ENCODE measurements at regions of chr22 and their contacts with region 1.

Region 1: GRCh38 chr22:38850941-38851849 is 7.4 kb upstream of the NPTXR start:
- DNase-seq: no peak
- H3K4me3 ChIP-seq: no peak overlapping the region
- H3K27ac ChIP-seq: no peak overlapping the region
- H3K4me1 ChIP-seq: no peaks in the 10 kb centered on the region
- H3K27me3 ChIP-seq: peaks cover 0 to 11% (median 0%) of the 10 kb centered on the region in 3 donors
- CTCF ChIP-seq: no peak
- EP300 ChIP-seq: no peak
- POLR2A ChIP-seq: no peak

Region 2: GRCh38 chr22:38777087-38777671 is 74.0 kb before region 1 on chr22:
- intact Hi-C with region 1: loop called (anchors 10 kb)
- DNase-seq: no peak
- H3K4me3 ChIP-seq: no peak overlapping the region
- H3K27ac ChIP-seq: no peak overlapping the region
- H3K4me1 ChIP-seq: no peaks in the 10 kb centered on the region
- H3K27me3 ChIP-seq: no peaks in the 10 kb centered on the region
- CTCF ChIP-seq: no peak
- EP300 ChIP-seq: no peak
- POLR2A ChIP-seq: no peak

Region 3: DNA sequence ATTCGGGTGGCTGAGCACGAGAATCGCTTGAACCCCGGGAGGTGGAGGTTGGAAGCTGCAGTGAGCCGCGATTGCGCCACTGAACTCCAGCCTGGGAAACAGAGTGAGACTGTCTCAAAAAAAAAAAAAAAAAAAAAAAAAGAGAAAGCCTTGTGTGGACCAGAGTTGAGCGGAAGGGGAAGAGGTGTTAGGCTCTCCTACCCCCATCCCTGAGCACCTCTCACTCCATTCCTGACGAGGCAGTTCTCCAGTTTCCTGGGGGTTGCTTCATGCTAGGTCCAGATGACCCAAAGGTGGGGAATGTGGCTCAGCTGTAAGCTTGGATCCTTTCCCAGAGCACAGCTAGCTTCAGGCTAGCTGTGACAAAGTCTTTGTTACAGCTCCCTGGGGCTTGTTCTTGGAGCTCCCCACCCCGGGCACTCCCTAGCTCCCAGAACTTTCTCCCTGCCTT is 48.5 kb before region 1 on chr22:
- intact Hi-C with region 1: no loop called
- DNase-seq: peak; percentile 35 to 66
- H3K4me3 ChIP-seq: no peak overlapping the region
- H3K27ac ChIP-seq: no peak overlapping the region
- H3K4me1 ChIP-seq: peaks cover 0 to 8% (median 1%) of the 10 kb centered on the region in 4 donors
- H3K27me3 ChIP-seq: peaks cover 0 to 38% (median 8%) of the 10 kb centered on the region in 3 donors
- CTCF ChIP-seq: no peak
- EP300 ChIP-seq: no peak
- POLR2A ChIP-seq: no peak